ENCODE measurements at regions of chr10 and their contacts with region 1.

Region 1: GRCh38 chr10:71396084-71396720 is 518 bp upstream of the CDH23 start:
- DNase-seq: peak; percentile 64 to 66
- ATAC-seq: peak; percentile 91 to 95 (median 92)
- H3K4me3 ChIP-seq: peak overlapping the region; percentile 38 to 70 (median 58)
- H3K27ac ChIP-seq: peak overlapping the region in 3 of 10 donors; percentile 30 to 69 (median 64)
- H3K4me1 ChIP-seq: peaks cover 5 to 27% (median 15%) of the 10 kb centered on the region in 9 donors
- H3K27me3 ChIP-seq: peaks cover 0 to 61% (median 36%) of the 10 kb centered on the region in 7 donors
- CTCF ChIP-seq: peak; percentile 51 to 87 (median 76)

Region 2: DNA sequence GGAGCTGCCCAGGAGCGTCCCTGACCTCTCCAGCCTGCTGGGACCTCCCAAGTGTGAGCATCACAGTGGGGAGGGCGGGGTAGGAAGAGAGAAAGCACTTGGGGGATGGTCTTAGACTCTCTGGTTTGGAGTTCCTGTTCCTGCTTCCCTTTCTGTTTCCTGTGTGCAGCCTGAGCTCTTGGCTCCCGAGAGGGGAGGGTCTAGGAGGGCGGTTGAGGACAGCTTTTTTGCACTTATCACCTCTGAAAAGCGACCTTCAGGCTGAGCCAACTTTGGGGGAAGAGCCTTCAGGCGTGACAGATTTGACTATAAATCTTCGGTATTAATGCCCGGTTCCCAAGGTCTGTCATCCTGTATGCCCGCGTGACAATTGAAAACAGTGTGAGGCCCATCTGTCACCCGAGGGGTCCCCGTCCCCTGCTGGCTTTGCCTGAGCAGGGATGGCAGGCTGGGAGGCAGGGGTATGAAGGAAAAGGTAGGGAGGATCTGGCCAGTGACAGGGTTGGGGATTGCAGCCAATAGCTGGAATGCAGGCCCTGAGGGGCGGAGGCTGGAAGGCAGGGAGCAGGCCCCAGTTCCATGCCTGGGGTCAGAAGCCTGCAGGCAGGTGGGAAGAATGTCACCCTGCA is 79.2 kb after region 1 on chr10:
- intact Hi-C with region 1: loop called in 6 of 10 experiments (anchors 5 to 10 kb)
- DNase-seq: peak in 1 of 2 donors; percentile 40
- ATAC-seq: peak; percentile 8 to 43 (median 32)
- H3K4me3 ChIP-seq: peak overlapping the region in 1 of 10 donors; percentile 20
- H3K27ac ChIP-seq: peak overlapping the region in 9 of 10 donors; percentile 32 to 70 (median 53)
- H3K4me1 ChIP-seq: peaks cover 15 to 84% (median 61%) of the 10 kb centered on the region in 9 donors
- H3K27me3 ChIP-seq: no peaks in the 10 kb centered on the region
- CTCF ChIP-seq: no peak

Region 3: GRCh38 chr10:71569775-71570588 is 173.8 kb after region 1 on chr10:
- intact Hi-C with region 1: loop called (anchors 1 to 5 kb)
- DNase-seq: peak; percentile 58 to 77
- ATAC-seq: peak in 7 of 8 donors; percentile 44 to 73 (median 68)
- H3K4me3 ChIP-seq: no peak overlapping the region
- H3K27ac ChIP-seq: no peak overlapping the region
- H3K4me1 ChIP-seq: no peaks in the 10 kb centered on the region
- H3K27me3 ChIP-seq: no peaks in the 10 kb centered on the region
- CTCF ChIP-seq: peak; percentile 74 to 89 (median 87)

Region 4: DNA sequence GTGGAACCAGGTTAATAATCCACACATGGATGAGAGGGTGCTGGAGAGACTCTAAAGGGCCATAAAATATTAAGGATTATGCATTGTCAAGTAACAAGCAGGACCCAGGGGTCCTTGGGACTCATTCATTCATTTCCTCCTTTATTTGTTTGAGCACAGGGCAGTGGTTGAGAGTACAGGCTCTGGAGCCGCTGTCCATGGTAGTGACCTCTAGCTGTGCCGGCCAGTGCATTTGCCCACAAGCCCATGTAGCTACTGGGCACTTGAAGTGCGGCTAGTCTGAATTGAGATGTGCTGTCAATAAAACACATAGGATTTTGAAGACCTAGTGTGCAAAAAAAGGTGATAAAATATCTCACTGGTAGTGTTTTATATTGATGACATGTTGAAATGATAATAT is 185.8 kb after region 1 on chr10:
- intact Hi-C with region 1: no loop called
- DNase-seq: peak in 1 of 2 donors; percentile 24
- ATAC-seq: peak in 3 of 8 donors; percentile 55 to 69 (median 68)
- H3K4me3 ChIP-seq: no peak overlapping the region
- H3K27ac ChIP-seq: no peak overlapping the region
- H3K4me1 ChIP-seq: no peaks in the 10 kb centered on the region
- H3K27me3 ChIP-seq: peaks cover 0 to 8% (median 0%) of the 10 kb centered on the region in 7 donors
- CTCF ChIP-seq: no peak

Region 5: DNA sequence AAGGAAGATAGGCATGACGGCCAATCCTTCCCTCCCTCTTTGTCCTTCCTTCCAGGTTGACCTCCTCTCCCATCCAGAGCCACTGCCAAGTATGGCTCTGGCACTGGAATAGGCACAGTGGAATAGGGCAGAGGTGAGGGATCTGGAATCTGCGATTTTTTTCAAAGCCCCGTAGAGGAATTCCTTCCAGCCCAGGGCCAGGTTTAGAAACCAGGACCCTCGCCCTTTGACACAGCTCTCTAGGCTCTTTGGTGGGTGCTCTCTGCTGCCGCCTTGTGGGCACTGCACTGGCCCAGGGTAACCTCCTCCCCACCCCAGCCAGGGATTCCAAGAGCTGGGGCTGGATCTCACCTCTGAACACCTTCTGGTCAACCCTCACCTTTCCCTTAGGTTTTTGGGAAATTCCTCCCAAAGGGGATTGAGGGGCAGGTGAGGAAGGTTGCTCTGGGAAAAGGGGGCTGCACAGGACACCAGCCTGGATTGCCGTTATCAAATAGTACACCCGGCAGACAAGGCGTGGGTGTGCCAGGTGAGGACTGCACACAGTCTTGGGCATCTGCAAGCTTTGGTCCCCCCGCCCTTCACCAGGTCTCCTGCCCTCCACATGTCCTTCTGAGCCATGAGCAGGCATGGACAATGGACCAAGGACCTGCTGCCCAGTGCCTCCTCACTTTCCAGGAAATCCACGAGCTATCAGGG is 300.6 kb after region 1 on chr10:
- intact Hi-C with region 1: loop called in 1 of 10 experiments (anchors 5 kb)
- DNase-seq: peak; percentile 61 to 78
- ATAC-seq: peak; percentile 47 to 73 (median 70)
- H3K4me3 ChIP-seq: no peak overlapping the region
- H3K27ac ChIP-seq: peak overlapping the region in 2 of 10 donors; percentile 16 to 87
- H3K4me1 ChIP-seq: peaks cover 0 to 67% (median 57%) of the 10 kb centered on the region in 9 donors
- H3K27me3 ChIP-seq: no peaks in the 10 kb centered on the region
- CTCF ChIP-seq: peak; percentile 75 to 90 (median 84)

Region 6: GRCh38 chr10:71805776-71806703 is 409.8 kb after region 1 on chr10:
- intact Hi-C with region 1: loop called in 1 of 10 experiments (anchors 10 kb)
- DNase-seq: peak in 1 of 2 donors; percentile 48
- ATAC-seq: peak in 7 of 8 donors; percentile 29 to 66 (median 55)
- H3K4me3 ChIP-seq: no peak overlapping the region
- H3K27ac ChIP-seq: no peak overlapping the region
- H3K4me1 ChIP-seq: peaks cover 0 to 21% (median 0%) of the 10 kb centered on the region in 9 donors
- H3K27me3 ChIP-seq: peaks cover 0 to 15% (median 0%) of the 10 kb centered on the region in 7 donors
- CTCF ChIP-seq: no peak

Region 7: DNA sequence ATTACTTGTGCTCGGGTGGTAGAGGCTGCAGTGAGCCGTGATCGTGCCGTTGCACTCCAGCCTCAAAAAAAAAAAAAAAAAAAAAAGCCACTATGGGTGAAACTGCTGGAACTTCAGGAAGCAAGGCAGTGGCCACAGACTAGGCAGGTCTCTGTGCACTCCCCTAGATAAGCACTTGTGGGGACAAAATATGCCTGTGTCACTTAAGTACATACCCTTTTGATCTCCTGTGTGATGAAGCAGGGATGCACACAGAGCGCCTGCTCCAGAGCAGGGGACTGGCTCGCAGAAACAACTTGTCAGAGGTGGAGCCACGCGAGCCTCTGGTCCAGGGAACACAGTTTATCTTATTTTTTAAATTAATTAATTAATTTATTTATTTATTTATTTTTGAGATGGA is 497.7 kb after region 1 on chr10:
- intact Hi-C with region 1: loop called in 2 of 10 experiments (anchors 10 kb)
- DNase-seq: no peak
- ATAC-seq: no peak
- H3K4me3 ChIP-seq: no peak overlapping the region
- H3K27ac ChIP-seq: no peak overlapping the region
- H3K4me1 ChIP-seq: peaks cover 0 to 49% (median 8%) of the 10 kb centered on the region in 9 donors
- H3K27me3 ChIP-seq: no peaks in the 10 kb centered on the region
- CTCF ChIP-seq: no peak